PC-9 (cell line): ENCODE measurements at regions of chr4 and their contacts with region 1.

Region 1: GRCh38 chr4:53908661-53909078 is 155.7 kb downstream of the CHIC2 start:
- DNase-seq: peak; percentile 20 to 82
- H3K4me3 ChIP-seq: no peak overlapping the region
- H3K27ac ChIP-seq: no peak overlapping the region
- H3K4me1 ChIP-seq: peaks cover 4% of the 10 kb centered on the region; the same call in 1 of the 2 replicates
- H3K27me3 ChIP-seq: no peaks in the 10 kb centered on the region
- CTCF ChIP-seq: peak; percentile 74

Region 2: GRCh38 chr4:52376132-52376704 is 1532.5 kb before region 1 on chr4:
- CTCF ChIA-PET with region 1: no interaction called
- POLR2A ChIA-PET with region 1: no interaction called
- intact Hi-C with region 1: loop called (anchors 10 kb)
- DNase-seq: no peak
- H3K4me3 ChIP-seq: no peak overlapping the region
- H3K27ac ChIP-seq: no peak overlapping the region
- H3K4me1 ChIP-seq: no peaks in the 10 kb centered on the region
- H3K27me3 ChIP-seq: no peaks in the 10 kb centered on the region
- CTCF ChIP-seq: peak; percentile 84

Region 3: GRCh38 chr4:53015681-53016080 is 893.0 kb before region 1 on chr4:
- CTCF ChIA-PET with region 1: no interaction called
- POLR2A ChIA-PET with region 1: no interaction called
- intact Hi-C with region 1: loop called (anchors 10 kb)
- DNase-seq: no peak
- H3K4me3 ChIP-seq: no peak overlapping the region
- H3K27ac ChIP-seq: no peak overlapping the region
- H3K4me1 ChIP-seq: no peaks in the 10 kb centered on the region; the same call in 1 of the 2 replicates
- H3K27me3 ChIP-seq: no peaks in the 10 kb centered on the region
- CTCF ChIP-seq: peak; percentile 60

Region 4: GRCh38 chr4:53196882-53197771 is 711.5 kb before region 1 on chr4:
- CTCF ChIA-PET with region 1: no interaction called
- POLR2A ChIA-PET with region 1: no interaction called
- intact Hi-C with region 1: loop called (anchors 5 kb)
- DNase-seq: no peak
- H3K4me3 ChIP-seq: no peak overlapping the region
- H3K27ac ChIP-seq: no peak overlapping the region
- H3K4me1 ChIP-seq: no peaks in the 10 kb centered on the region
- H3K27me3 ChIP-seq: no peaks in the 10 kb centered on the region
- CTCF ChIP-seq: peak; percentile 88

Region 5: DNA sequence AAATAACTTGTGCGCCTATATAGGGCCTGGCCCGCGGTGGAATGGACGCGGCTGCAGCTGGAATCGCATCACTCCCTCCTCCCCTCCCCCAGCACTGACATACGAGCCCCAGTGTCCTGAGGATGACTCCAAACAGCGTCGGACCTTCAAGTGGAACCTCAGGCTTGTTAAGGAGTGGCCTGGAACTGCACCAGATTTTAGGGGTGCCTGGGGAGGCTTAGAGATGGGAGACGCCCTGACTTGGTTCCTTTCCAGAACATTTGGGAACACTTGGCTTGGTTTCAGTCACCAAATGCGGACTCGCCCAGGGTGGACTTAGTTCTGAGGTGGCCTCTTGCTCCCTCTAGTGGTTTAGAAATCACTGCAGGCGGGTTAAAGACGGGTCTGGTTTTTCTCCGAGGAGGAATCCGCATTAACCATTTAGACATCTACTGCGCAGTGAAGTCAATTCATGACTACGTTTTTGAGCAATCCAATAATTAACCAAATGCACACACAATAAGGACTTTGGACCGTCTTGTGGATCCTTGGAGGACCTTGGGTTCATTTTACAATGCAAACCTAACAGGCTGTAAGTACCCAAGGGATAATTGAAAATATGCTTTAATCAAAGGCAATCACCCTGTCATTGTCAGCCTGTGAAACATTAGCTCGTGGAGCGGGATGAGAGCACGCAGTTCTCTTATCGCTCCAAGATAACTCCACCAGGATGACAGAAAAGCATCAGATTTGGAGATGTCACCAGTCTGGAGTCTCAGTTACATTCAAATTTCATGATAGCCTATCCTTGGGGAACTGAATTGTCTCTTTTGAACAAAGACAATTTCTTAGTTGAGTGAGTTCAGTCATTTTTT is 309.2 kb after region 1 on chr4:
- CTCF ChIA-PET with region 1: interaction called, 3 read pairs
- POLR2A ChIA-PET with region 1: no interaction called
- intact Hi-C with region 1: loop called (anchors 1 kb)
- DNase-seq: peak; percentile 48 to 61
- H3K4me3 ChIP-seq: peak overlapping the region; percentile 49; the same call in 1 of the 2 replicates
- H3K27ac ChIP-seq: no peak overlapping the region
- H3K4me1 ChIP-seq: no peaks in the 10 kb centered on the region; the same call in 1 of the 2 replicates
- H3K27me3 ChIP-seq: no peaks in the 10 kb centered on the region
- CTCF ChIP-seq: peak; percentile 88

Region 6: DNA sequence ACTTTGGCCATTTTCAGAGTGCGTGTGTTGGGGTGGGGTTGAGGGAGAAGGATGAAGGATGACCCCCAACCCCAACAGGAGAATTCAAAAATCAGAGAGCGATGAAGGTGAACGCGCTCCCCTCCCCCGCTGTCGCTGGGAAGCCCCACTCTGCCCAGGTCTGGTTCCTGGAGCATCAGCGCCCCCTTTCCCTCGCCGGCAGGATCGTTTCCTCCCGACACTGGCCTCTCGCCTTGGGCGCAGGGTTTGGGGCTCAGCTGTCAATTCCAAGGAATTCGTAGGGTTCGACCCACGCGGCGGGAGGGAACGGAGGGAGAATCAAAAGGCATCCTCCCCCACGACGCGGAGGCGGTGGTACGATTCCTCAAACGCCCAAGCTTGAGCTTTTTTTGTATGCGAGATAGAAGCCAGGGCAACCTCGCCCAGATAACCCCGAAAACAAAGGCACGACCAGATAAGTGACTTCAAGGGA is 319.4 kb after region 1 on chr4:
- CTCF ChIA-PET with region 1: no interaction called
- POLR2A ChIA-PET with region 1: no interaction called
- intact Hi-C with region 1: loop called (anchors 1 kb)
- DNase-seq: peak in 1 of 2 experiments; percentile 21
- H3K4me3 ChIP-seq: no peak overlapping the region
- H3K27ac ChIP-seq: no peak overlapping the region
- H3K4me1 ChIP-seq: no peaks in the 10 kb centered on the region
- H3K27me3 ChIP-seq: no peaks in the 10 kb centered on the region
- CTCF ChIP-seq: no peak

Region 7: DNA sequence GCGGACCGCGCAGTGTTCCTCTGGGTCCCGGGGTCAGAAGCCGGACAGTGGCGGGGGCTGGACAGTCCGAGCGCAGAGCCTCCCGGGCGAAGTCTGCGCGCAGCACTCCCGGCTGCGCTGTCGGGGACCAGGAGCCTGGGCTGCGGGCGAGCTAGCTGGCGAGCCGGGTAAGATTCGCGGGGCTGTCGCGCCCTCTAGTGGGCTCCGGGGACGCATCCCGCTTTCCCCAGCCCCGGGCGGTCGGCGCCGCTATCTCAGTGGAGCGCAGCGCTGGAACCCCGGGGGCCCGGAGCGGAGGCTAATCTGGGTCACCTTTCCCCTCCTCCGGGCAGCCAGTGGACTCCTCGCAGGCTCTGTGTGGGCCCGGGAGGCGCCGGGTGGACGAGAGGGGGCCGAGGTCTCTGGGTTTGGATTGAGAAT is 324.6 kb after region 1 on chr4:
- CTCF ChIA-PET with region 1: interaction called, 11 read pairs
- POLR2A ChIA-PET with region 1: no interaction called
- intact Hi-C with region 1: loop called (anchors 1 kb)
- DNase-seq: peak in 1 of 2 experiments; percentile 67
- H3K4me3 ChIP-seq: no peak overlapping the region; the same call in 1 of the 2 replicates
- H3K27ac ChIP-seq: no peak overlapping the region
- H3K4me1 ChIP-seq: no peaks in the 10 kb centered on the region
- H3K27me3 ChIP-seq: no peaks in the 10 kb centered on the region
- CTCF ChIP-seq: peak; percentile 67